ENCODE measurements at regions of chr19 and their contacts with region 1.

Region 1: DNA sequence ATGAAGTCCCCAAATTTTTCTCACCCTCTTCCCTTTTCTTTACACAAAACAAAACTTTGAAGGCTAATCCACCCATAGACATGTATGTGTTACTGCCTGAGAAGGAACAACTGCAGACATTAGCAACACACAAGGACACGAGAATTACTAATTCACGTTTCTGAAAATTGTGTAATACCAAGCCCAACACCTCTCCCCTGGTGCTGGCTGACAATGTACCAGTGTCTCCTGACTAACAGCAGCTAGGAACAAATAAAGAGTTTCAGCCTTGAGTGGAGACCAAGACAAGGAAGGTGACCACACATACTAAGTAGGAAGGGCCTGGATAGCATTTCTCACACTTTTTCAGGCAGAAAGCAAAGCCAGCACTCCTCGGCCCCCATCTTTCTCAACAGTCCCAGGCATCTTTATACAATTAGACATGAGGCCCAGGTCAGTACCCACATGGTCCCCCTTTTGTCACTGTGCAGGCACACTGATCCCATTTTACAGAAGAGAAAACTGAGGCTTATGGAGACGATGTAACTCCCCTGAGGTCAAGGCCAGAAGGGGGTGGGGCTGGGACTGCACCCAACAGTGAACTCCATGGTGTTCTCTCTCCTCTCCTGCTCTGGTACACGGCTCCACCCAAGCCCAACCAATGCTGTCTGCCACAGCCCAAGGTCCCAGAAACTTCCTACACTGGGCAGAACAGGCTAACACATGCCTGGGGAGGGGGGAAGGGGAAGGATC is 8.7 kb downstream of the BRD4 start:
- DNase-seq: no peak
- ATAC-seq: peak; percentile 62

Region 2: GRCh38 chr19:15280915-15281683 is 42.6 kb before region 1 on chr19:
- intact Hi-C with region 1: loop called (anchors 5 kb)
- DNase-seq: peak; percentile 92
- ATAC-seq: peak; percentile 92

Region 3: GRCh38 chr19:15292847-15293582 is 30.6 kb before region 1 on chr19:
- intact Hi-C with region 1: loop called (anchors 2 kb)
- DNase-seq: no peak
- ATAC-seq: peak; percentile 50

Measured in Right ventricle myocardium inferior (tissue), 1 donor.